ENCODE measurements at regions of chr5 and their contacts with region 1.

Region 1: DNA sequence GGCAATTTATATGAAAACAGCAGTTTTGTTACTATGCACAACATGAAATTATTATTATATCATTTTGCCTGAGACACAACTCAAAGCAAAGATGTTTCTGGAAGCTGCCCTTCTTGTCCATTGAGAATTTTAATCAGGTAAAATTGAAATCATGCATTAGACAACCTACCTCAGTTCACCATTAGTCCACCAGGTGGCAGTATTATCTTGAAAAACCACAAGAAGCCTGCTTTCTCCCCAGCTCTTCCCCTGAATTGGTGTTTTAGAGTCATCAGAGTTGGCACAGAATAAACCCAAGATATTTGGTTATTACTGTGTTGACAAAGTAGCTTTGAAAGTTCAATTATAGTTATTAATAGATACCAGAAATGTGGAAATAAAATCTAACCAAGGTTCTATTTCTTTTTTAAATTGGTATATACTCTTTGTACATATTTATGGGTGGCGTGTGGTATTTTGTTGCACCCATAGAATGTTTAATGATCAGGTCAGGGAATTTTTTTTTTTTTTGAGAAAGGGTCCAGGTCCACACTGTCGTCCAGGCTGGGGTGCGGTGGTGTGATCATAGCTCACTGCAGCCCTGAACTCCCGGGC is 25.7 kb downstream of the UTP15 start:
- DNase-seq: peak; percentile 82
- H3K4me3 Mint-ChIP-seq: no peak overlapping the region
- H3K27ac Mint-ChIP-seq: no peak overlapping the region
- H3K4me1 Mint-ChIP-seq: peaks cover 23% of the 10 kb centered on the region
- H3K27me3 Mint-ChIP-seq: no peaks in the 10 kb centered on the region
- CTCF ChIP-seq: peak; percentile 84

Region 2: GRCh38 chr5:73625944-73626811 is 35.0 kb after region 1 on chr5 and contains the start of gene ARHGEF28:
- CTCF ChIA-PET with region 1: interaction called, 3 read pairs
- intact Hi-C with region 1: loop called (anchors 5 kb)
- DNase-seq: peak; percentile 90
- H3K4me3 Mint-ChIP-seq: peak within 1 kb of the TSS; percentile 85
- H3K27ac Mint-ChIP-seq: peak within 1 kb of the TSS; percentile 56
- H3K4me1 Mint-ChIP-seq: peaks cover 58% of the 10 kb centered on the region
- H3K27me3 Mint-ChIP-seq: no peaks in the 10 kb centered on the region
- CTCF ChIP-seq: no peak
- total RNA-seq, gene ARHGEF28: 79.3 and 92.0 TPM in 2 replicates

Region 3: GRCh38 chr5:73693481-73694061 is 102.4 kb after region 1 on chr5:
- CTCF ChIA-PET with region 1: interaction called, 15 read pairs
- intact Hi-C with region 1: loop called (anchors 1 kb)
- DNase-seq: peak; percentile 51
- H3K4me3 Mint-ChIP-seq: no peak overlapping the region
- H3K27ac Mint-ChIP-seq: no peak overlapping the region
- H3K4me1 Mint-ChIP-seq: peaks cover 59% of the 10 kb centered on the region
- H3K27me3 Mint-ChIP-seq: no peaks in the 10 kb centered on the region
- CTCF ChIP-seq: peak; percentile 60

Region 4: GRCh38 chr5:73783828-73784227 is 192.6 kb after region 1 on chr5:
- CTCF ChIA-PET with region 1: interaction called, 12 read pairs
- intact Hi-C with region 1: no loop called
- DNase-seq: no peak
- H3K4me3 Mint-ChIP-seq: no peak overlapping the region
- H3K27ac Mint-ChIP-seq: no peak overlapping the region
- H3K4me1 Mint-ChIP-seq: peaks cover 9% of the 10 kb centered on the region
- H3K27me3 Mint-ChIP-seq: no peaks in the 10 kb centered on the region
- CTCF ChIP-seq: no peak

Region 5: GRCh38 chr5:73792687-73793320 is 201.6 kb after region 1 on chr5:
- CTCF ChIA-PET with region 1: interaction called, 39 read pairs
- intact Hi-C with region 1: loop called (anchors 1 kb)
- DNase-seq: peak; percentile 84
- H3K4me3 Mint-ChIP-seq: no peak overlapping the region
- H3K27ac Mint-ChIP-seq: peak overlapping the region; percentile 47
- H3K4me1 Mint-ChIP-seq: peaks cover 62% of the 10 kb centered on the region
- H3K27me3 Mint-ChIP-seq: no peaks in the 10 kb centered on the region
- CTCF ChIP-seq: peak; percentile 98

Region 6: GRCh38 chr5:73812962-73813588 is 221.9 kb after region 1 on chr5:
- CTCF ChIA-PET with region 1: interaction called, 11 read pairs
- intact Hi-C with region 1: no loop called
- DNase-seq: peak; percentile 76
- H3K4me3 Mint-ChIP-seq: peak overlapping the region; percentile 81
- H3K27ac Mint-ChIP-seq: peak overlapping the region; percentile 86
- H3K4me1 Mint-ChIP-seq: peaks cover 53% of the 10 kb centered on the region
- H3K27me3 Mint-ChIP-seq: no peaks in the 10 kb centered on the region
- CTCF ChIP-seq: no peak